GM12878 (cell line): ENCODE measurements at regions of chr2 and their contacts with region 1.

Region 1: GRCh38 chr2:202278944-202279343 is 13.4 kb downstream of the NOP58 start:
- DNase-seq: no peak
- ATAC-seq: peak; percentile 41
- H3K4me3 ChIP-seq: no peak overlapping the region
- H3K27ac ChIP-seq: no peak overlapping the region; the same call in 1 of the 2 replicates
- H3K4me1 ChIP-seq: 0 out of 2 replicates have a peak, but pooled peaks cover 4% of the 10 kb centered on the region
- H3K27me3 ChIP-seq: no peaks in the 10 kb centered on the region
- CTCF ChIP-seq: peak; percentile 30 to 39 (median 35); a peak in 3 of 6 replicates
- EP300 ChIP-seq: no peak
- POLR2A ChIP-seq: no peak
- RAD21 ChIP-seq: peak; percentile 36; the same call in 1 of the 2 replicates

Region 2: GRCh38 chr2:202096736-202097135 is 182.2 kb before region 1 on chr2:
- CTCF ChIA-PET with region 1: no interaction called
- POLR2A ChIA-PET with region 1: no interaction called
- RAD21 ChIA-PET with region 1: no interaction called
- SMC1A ChIA-PET with region 1: no interaction called
- in situ Hi-C with region 1: no loop called
- intact Hi-C with region 1: no loop called
- DNase-seq: no peak
- ATAC-seq: no peak
- H3K4me3 ChIP-seq: no peak overlapping the region
- H3K27ac ChIP-seq: no peak overlapping the region
- H3K4me1 ChIP-seq: no peaks in the 10 kb centered on the region
- H3K27me3 ChIP-seq: no peaks in the 10 kb centered on the region
- CTCF ChIP-seq: no peak
- EP300 ChIP-seq: no peak
- POLR2A ChIP-seq: no peak
- RAD21 ChIP-seq: no peak

Region 3: GRCh38 chr2:202299712-202300111 is 20.8 kb after region 1 on chr2:
- CTCF ChIA-PET with region 1: interaction called, 12 read pairs
- POLR2A ChIA-PET with region 1: no interaction called
- RAD21 ChIA-PET with region 1: interaction called, 5 read pairs
- SMC1A ChIA-PET with region 1: interaction called, 9 read pairs
- in situ Hi-C with region 1: no loop called
- intact Hi-C with region 1: loop called (anchors 2 kb)
- DNase-seq: peak; percentile 30
- ATAC-seq: peak; percentile 92
- H3K4me3 ChIP-seq: no peak overlapping the region
- H3K27ac ChIP-seq: no peak overlapping the region
- H3K4me1 ChIP-seq: peaks cover 8% of the 10 kb centered on the region
- H3K27me3 ChIP-seq: no peaks in the 10 kb centered on the region
- CTCF ChIP-seq: no peak
- EP300 ChIP-seq: 0 out of 4 replicates have a peak, but pooled peaks of 1 of the 2 experiments have one; percentile 32
- POLR2A ChIP-seq: no peak
- RAD21 ChIP-seq: no peak